Caco-2 (cell line): ENCODE measurements at regions of chr11 and their contacts with region 1.

Region 1: DNA sequence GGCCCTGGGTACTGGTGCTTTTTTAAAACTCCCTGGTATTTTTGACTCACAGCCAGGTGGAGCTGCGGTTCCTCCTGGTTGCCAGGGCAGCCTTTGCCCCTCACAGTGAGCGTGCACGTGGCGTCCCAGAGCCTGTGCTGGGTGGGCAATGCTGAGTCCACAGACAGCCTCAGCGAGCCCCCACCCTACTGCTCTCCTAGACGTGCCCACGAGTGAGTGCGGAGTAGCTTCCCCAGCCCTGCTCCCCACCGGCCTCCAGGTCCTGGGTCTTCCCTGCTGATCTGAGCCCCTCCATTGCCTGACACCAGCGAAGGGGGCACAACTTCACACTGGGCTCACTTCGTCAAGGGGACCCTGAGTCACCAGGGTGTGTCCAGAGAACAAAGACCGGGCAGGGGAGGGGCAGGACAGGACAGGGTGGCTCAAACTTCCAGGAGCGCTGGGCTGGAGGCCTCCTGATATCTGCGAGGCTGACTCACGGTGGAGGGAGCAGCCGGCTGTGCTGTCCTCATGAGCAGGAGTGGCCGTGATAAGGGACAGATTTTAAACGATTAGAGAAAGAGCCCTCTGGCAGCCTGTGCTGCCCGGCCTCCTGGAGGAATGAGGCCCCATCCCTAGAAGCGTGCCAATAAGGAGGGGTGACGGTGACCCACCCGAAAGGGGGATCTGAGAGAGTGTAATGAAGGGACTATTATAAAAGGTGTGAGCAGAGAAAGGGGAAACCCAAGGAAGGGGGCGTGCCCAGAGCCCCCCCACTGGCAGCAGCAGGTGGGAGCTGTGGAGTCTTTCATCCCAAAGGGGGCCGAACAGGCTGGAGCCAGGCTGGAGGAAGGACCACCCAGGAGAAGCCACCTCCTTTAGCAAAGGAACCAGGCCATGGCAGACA is 129.3 kb upstream of the FGF3 start:
- DNase-seq: peak; percentile 86 to 94
- H3K4me3 ChIP-seq: no peak overlapping the region
- H3K4me3 Mint-ChIP-seq: peak overlapping the region; percentile 47
- H3K27ac Mint-ChIP-seq: peak overlapping the region; percentile 93
- H3K4me1 ChIP-seq: peaks cover 44% of the 10 kb centered on the region
- H3K4me1 Mint-ChIP-seq: peaks cover 31% of the 10 kb centered on the region
- H3K27me3 ChIP-seq: no peaks in the 10 kb centered on the region
- H3K27me3 Mint-ChIP-seq: no peaks in the 10 kb centered on the region
- CTCF ChIP-seq: peak; percentile 53 to 62

Region 2: GRCh38 chr11:69881449-69882269 is 66.8 kb before region 1 on chr11:
- CTCF ChIA-PET with region 1: no interaction called
- POLR2A ChIA-PET with region 1: no interaction called
- intact Hi-C with region 1: no loop called
- DNase-seq: peak in 1 of 2 experiments; percentile 40
- H3K4me3 ChIP-seq: no peak overlapping the region
- H3K4me3 Mint-ChIP-seq: no peak overlapping the region
- H3K27ac Mint-ChIP-seq: no peak overlapping the region
- H3K4me1 ChIP-seq: no peaks in the 10 kb centered on the region
- H3K4me1 Mint-ChIP-seq: no peaks in the 10 kb centered on the region
- H3K27me3 ChIP-seq: 0 out of 2 replicates have a peak, but pooled peaks cover 2% of the 10 kb centered on the region
- H3K27me3 Mint-ChIP-seq: no peaks in the 10 kb centered on the region
- CTCF ChIP-seq: peak in 1 of 2 experiments; percentile 27

Region 3: DNA sequence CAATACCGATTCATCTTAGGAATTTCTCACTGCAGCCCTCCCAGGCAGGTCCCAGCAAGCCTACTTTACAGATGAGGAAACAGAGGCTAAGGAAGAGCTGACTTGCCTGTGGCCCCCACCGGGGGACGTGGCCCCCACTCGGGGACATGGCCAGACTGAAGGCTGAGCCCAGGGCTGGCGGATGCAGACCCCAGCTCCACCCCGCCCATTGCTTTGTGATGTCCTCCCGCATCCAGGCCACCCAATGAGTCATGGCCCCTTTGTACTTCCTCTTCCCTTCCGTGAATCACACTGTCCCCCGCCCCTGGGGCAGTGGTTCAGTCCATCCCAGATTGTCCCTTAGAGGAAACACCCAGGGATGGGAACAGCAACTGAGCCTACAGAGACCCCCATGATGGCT is 13.7 kb after region 1 on chr11:
- CTCF ChIA-PET with region 1: interaction called, 9 read pairs
- POLR2A ChIA-PET with region 1: no interaction called
- intact Hi-C with region 1: loop called (anchors 1 kb)
- DNase-seq: no peak
- H3K4me3 ChIP-seq: no peak overlapping the region
- H3K4me3 Mint-ChIP-seq: no peak overlapping the region
- H3K27ac Mint-ChIP-seq: no peak overlapping the region
- H3K4me1 ChIP-seq: peaks cover 20% of the 10 kb centered on the region
- H3K4me1 Mint-ChIP-seq: peaks cover 27% of the 10 kb centered on the region
- H3K27me3 ChIP-seq: no peaks in the 10 kb centered on the region
- H3K27me3 Mint-ChIP-seq: no peaks in the 10 kb centered on the region
- CTCF ChIP-seq: no peak

Region 4: GRCh38 chr11:69969890-69970784 is 21.6 kb after region 1 on chr11:
- CTCF ChIA-PET with region 1: interaction called, 9 read pairs
- POLR2A ChIA-PET with region 1: no interaction called
- intact Hi-C with region 1: loop called (anchors 1 kb)
- DNase-seq: peak; percentile 89 to 94
- H3K4me3 ChIP-seq: no peak overlapping the region
- H3K4me3 Mint-ChIP-seq: peak overlapping the region; percentile 61
- H3K27ac Mint-ChIP-seq: peak overlapping the region; percentile 88
- H3K4me1 ChIP-seq: peaks cover 94% of the 10 kb centered on the region
- H3K4me1 Mint-ChIP-seq: peaks cover 63% of the 10 kb centered on the region
- H3K27me3 ChIP-seq: no peaks in the 10 kb centered on the region
- H3K27me3 Mint-ChIP-seq: no peaks in the 10 kb centered on the region
- CTCF ChIP-seq: no peak

Region 5: GRCh38 chr11:70170596-70171210 is 222.2 kb after region 1 on chr11:
- CTCF ChIA-PET with region 1: no interaction called
- POLR2A ChIA-PET with region 1: no interaction called
- intact Hi-C with region 1: no loop called
- DNase-seq: no peak
- H3K4me3 ChIP-seq: no peak overlapping the region
- H3K4me3 Mint-ChIP-seq: no peak overlapping the region
- H3K27ac Mint-ChIP-seq: no peak overlapping the region
- H3K4me1 ChIP-seq: peaks cover 8% of the 10 kb centered on the region
- H3K4me1 Mint-ChIP-seq: peaks cover 6% of the 10 kb centered on the region
- H3K27me3 ChIP-seq: no peaks in the 10 kb centered on the region
- H3K27me3 Mint-ChIP-seq: no peaks in the 10 kb centered on the region
- CTCF ChIP-seq: no peak